GM10248 (cell line): ENCODE measurements at regions of chr20 and their contacts with region 1.

Region 1: GRCh38 chr20:41697861-41698419 is 79.8 kb upstream of the CHD6 start:
- DNase-seq: peak; percentile 43
- CTCF ChIP-seq: peak; percentile 70

Region 2: DNA sequence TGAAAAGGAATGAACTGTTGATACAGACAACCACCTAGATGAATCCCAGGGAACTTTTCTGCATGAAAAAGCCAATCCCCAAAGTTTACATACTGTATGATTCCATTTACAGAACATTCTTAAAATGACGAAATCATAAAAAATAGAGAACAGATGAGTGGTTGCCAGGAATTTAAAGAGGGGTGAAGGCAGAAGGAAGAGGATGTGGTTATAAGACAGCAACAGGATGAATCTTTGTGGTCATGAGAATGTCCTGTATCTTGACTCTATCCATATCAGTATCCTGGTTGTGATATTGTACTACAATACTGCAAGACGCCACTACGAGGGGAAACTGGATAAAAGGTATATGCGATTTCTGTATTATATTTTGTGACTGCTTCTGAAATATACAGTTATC is 261.3 kb before region 1 on chr20:
- CTCF ChIA-PET with region 1: no interaction called
- POLR2A ChIA-PET with region 1: no interaction called
- DNase-seq: no peak
- CTCF ChIP-seq: no peak

Region 3: DNA sequence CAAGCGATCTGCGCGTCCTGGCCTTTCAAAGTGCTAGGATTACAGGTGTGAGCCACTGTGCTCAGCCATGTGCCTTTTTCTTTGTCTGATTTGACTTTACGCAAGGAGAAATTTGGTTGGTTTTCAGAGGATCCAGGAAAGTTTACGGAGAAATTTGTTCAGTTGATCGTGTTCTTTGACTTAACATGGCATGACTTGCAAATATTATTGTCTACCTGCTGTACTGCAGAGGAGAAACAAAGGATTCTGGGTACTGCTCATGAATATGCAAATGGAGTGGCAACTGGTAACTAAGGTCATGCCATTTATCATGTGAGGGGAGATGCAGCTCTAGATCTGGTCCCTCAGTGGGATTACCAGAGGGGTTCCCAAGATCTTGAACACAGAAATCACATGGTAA is 11.0 kb before region 1 on chr20:
- CTCF ChIA-PET with region 1: interaction called, 12 read pairs
- POLR2A ChIA-PET with region 1: no interaction called
- DNase-seq: no peak
- CTCF ChIP-seq: no peak

Region 4: DNA sequence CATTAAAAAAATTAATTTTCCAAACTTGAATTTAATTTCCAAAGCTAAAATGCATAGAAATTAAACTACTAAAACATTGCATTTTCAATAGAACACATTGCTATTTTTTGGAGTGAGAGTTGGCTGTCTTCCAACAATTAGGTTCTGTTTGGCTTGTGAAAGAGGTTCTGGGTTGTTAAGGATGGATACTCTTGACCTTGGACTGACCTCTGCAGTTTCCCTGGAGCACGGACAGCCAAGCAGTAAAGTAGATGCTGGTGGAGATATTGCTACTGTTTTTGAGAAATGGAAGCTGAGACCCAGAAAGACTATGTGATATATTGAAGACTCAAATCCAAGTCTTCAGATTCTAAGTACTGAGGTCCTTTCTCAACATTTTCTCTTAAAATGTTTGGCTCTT is 16.1 kb after region 1 on chr20:
- CTCF ChIA-PET with region 1: interaction called, 14 read pairs
- POLR2A ChIA-PET with region 1: no interaction called
- DNase-seq: no peak
- CTCF ChIP-seq: no peak